ENCODE measurements at regions of chr4 and their contacts with region 1.

Region 1: DNA sequence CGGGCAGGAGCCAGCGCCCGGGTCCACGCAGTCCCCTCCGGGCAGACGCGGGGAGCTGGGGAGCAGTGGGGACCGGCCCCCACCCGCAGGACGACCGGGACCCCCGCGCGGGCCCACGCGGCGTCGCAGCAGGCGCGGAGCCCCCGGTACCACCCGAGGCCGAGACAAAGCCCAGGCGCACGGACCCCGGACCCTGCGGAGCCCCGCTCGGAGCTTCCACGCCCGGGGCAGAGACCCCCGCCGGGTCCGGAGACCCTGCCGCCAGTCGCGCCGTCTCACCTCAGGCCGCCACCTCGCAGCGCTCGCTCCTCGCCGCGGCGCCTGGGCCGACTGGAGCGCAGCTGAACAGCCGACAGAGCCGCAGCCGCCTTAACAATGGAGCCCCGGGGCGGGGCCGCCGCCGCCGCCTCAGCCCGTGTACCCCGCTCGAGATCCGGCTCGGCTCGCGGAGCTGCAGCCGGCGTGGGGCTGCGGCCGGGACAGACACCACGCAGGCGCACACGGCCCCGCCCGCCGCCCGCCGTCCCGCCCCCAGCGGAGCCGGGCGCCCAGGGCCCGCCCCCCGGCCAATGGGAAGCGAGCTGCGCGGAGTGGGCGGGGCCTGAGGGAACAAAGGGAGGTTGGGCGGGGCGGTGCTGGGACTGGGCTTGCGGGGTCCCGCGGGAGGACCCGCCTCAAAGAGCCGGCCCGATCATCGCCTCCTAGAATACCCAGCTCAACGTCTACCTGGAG is at the start of gene AFAP1:
- DNase-seq: peak; percentile 86 to 94 (median 92)
- H3K4me3 ChIP-seq: peak within 1 kb of the TSS; percentile 58 to 61
- H3K4me3 Mint-ChIP-seq: peak within 1 kb of the TSS; percentile 66 to 88 (median 74)
- H3K27ac ChIP-seq: peak within 1 kb of the TSS; percentile 70
- H3K27ac Mint-ChIP-seq: peak within 1 kb of the TSS; percentile 23 to 83 (median 45)
- H3K4me1 ChIP-seq: peaks cover 16% of the 10 kb centered on the region
- H3K4me1 Mint-ChIP-seq: peaks cover 12 to 39% (median 26%) of the 10 kb centered on the region in 4 donors
- H3K27me3 ChIP-seq: no peaks in the 10 kb centered on the region
- H3K27me3 Mint-ChIP-seq: peaks cover 0 to 2% of the 10 kb centered on the region in 2 donors
- total RNA-seq, gene AFAP1: 18.8 to 21.8 TPM

Region 2: DNA sequence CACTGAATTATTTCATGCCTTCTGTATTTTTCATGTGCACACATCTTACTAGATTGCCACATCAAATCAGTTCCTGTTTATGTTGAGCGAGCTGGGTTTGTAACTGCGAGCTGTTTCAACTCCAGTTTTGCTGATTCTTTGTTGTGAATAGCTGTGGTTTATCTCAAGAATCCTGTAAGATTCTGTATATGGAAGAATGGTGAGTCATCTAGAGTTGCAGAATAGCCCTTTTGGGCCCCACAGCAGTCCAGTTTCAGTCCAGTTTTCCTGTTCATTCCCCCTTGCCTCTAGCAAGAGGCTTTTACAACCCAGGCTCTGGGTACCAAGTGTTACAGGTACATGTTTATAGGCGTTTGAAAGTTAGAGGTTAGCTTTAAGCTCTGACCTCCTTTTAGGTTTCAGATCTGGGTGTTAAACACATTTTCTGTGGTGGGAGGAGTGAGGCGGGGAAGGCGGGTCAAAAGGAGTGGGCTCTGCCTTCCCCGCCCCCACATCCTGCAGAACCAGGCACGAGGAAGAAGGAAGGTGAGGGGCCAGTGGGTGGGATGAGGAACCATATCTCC is 997.2 kb before region 1 on chr4:
- CTCF ChIA-PET with region 1: no interaction called
- POLR2A ChIA-PET with region 1: no interaction called
- intact Hi-C with region 1: no loop called
- DNase-seq: peak; percentile 57 to 65 (median 63)
- H3K4me3 ChIP-seq: peak overlapping the region; percentile 25 to 30
- H3K4me3 Mint-ChIP-seq: peak overlapping the region; percentile 73 to 92 (median 82)
- H3K27ac ChIP-seq: peak overlapping the region; percentile 52
- H3K27ac Mint-ChIP-seq: peak overlapping the region; percentile 88 to 98 (median 89)
- H3K4me1 ChIP-seq: peaks cover 79% of the 10 kb centered on the region
- H3K4me1 Mint-ChIP-seq: peaks cover 54 to 87% (median 72%) of the 10 kb centered on the region in 4 donors
- H3K27me3 ChIP-seq: no peaks in the 10 kb centered on the region
- H3K27me3 Mint-ChIP-seq: no peaks in the 10 kb centered on the region

Region 3: DNA sequence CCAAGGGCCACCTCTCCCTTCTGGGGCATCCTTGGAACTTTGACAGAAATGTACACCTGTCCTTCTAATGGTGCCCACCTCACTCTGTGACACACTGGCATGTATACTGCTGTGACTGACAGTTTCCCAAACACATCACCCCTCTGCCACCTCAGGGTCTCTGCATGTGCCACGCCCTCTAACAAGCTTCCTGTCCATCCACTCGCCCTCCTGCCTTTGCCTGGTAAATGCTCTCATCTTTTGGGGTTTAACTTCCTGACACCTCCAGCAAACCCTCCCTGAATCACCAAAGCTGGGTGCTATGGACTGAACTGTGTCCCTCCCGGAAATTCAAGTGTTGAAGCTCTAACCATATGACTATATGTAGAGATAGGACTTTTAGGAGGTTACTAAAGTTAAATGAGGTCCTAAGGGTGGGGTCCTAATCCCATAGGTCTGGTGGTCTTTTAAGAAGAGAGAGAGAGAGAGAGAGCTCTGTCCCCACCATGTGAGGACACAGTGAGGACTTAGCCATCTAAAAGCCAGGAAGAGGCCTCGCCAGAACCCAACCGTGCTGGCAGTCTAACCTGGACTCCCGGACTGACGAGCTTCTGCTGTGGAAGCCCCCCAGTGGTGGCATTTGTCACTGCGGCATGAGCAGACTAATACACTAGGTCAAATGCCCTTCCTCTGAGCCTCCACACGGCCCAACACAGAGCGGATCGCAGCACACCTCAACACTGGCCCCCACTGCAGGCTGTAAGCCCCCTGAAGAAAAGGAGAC is 95.5 kb before region 1 on chr4:
- CTCF ChIA-PET with region 1: interaction called, 22 read pairs
- POLR2A ChIA-PET with region 1: interaction called, 9 read pairs
- intact Hi-C with region 1: no loop called
- DNase-seq: peak; percentile 54 to 72 (median 58)
- H3K4me3 ChIP-seq: no peak overlapping the region
- H3K4me3 Mint-ChIP-seq: peak overlapping the region in 1 of 8 donors; percentile 29
- H3K27ac ChIP-seq: no peak overlapping the region
- H3K27ac Mint-ChIP-seq: peak overlapping the region in 6 of 7 donors; percentile 33 to 94 (median 74)
- H3K4me1 ChIP-seq: peaks cover 19% of the 10 kb centered on the region
- H3K4me1 Mint-ChIP-seq: peaks cover 20 to 41% (median 32%) of the 10 kb centered on the region in 4 donors
- H3K27me3 ChIP-seq: no peaks in the 10 kb centered on the region
- H3K27me3 Mint-ChIP-seq: no peaks in the 10 kb centered on the region

Region 4: DNA sequence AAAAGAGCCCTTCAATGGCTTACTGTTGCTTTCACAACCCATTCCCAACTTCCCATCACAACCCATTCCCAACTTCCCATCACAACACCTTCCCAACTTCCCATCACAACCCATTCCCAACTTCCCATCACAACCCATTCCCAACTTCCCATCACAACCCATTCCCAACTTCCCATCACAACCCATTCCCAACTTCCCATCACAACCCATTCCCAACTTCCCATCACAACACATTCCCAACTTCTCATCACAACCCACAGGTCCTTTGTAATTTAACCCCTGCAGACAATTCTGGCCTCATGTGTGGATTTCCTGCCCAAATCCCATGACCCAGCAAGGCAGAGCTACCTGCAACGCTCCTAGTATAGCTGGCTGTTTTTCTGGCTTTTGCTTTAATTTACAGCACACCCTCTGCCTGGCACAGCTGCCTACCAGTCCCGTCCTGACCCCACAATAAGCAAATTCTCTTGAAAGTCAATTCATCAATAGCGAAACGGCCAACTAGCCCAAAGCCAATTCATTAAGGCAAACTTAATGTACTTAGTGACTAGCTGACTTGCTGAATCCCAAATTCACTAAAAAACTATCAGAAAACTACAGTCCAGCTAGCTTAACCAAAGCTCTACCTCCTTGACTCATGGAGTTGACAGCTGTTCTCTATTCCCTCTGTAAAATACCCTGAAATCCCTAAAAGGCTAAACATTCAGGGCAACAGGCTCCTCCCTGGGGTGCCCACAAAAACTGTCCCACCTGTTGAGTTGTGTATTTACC is 75.4 kb before region 1 on chr4:
- CTCF ChIA-PET with region 1: interaction called, 7 read pairs
- POLR2A ChIA-PET with region 1: interaction called, 26 read pairs
- intact Hi-C with region 1: no loop called
- DNase-seq: peak in 4 of 5 donors; percentile 36 to 68 (median 58)
- H3K4me3 ChIP-seq: no peak overlapping the region
- H3K4me3 Mint-ChIP-seq: peak overlapping the region in 7 of 8 donors; percentile 35 to 76 (median 61)
- H3K27ac ChIP-seq: no peak overlapping the region
- H3K27ac Mint-ChIP-seq: peak overlapping the region; percentile 60 to 99 (median 91)
- H3K4me1 ChIP-seq: peaks cover 18% of the 10 kb centered on the region
- H3K4me1 Mint-ChIP-seq: peaks cover 26 to 43% (median 34%) of the 10 kb centered on the region in 4 donors
- H3K27me3 ChIP-seq: no peaks in the 10 kb centered on the region
- H3K27me3 Mint-ChIP-seq: peaks cover 0 to 4% of the 10 kb centered on the region in 2 donors

Region 5: GRCh38 chr4:7964890-7965662 is 25.5 kb after region 1 on chr4:
- CTCF ChIA-PET with region 1: interaction called, 5 read pairs
- POLR2A ChIA-PET with region 1: interaction called, 51 read pairs
- intact Hi-C with region 1: loop called (anchors 1 kb)
- DNase-seq: peak; percentile 41 to 90 (median 60)
- H3K4me3 ChIP-seq: no peak overlapping the region
- H3K4me3 Mint-ChIP-seq: peak overlapping the region; percentile 46 to 86 (median 65)
- H3K27ac ChIP-seq: peak overlapping the region; percentile 66
- H3K27ac Mint-ChIP-seq: peak overlapping the region; percentile 88 to 97 (median 93)
- H3K4me1 ChIP-seq: peaks cover 60% of the 10 kb centered on the region
- H3K4me1 Mint-ChIP-seq: peaks cover 30 to 72% (median 52%) of the 10 kb centered on the region in 4 donors
- H3K27me3 ChIP-seq: no peaks in the 10 kb centered on the region
- H3K27me3 Mint-ChIP-seq: no peaks in the 10 kb centered on the region

Region 6: DNA sequence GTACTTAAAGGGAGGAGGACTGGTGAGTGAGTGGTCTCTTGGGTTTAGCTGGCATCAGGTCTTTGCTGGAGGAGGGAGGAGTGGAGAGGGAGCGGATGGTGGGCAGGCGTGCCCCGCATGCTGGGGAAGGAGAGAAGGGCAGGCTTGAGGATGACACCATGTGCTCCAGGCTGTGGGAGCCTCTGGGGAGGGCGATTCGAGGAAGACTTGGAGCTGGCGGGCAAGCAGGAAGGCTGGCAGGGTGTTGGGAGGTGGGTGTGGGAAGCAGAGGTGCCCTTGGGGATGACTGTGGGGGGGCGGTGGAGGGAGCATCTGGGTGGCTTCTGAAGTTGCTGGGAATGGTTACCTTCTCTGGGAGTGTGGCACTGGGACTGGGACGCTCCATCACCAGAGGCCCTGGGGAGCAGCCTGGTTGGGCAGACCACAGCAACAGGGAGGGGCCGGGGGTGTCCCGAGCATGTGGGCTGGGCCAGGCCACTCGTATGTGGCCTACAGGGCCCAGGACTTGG is 30.9 kb after region 1 on chr4:
- CTCF ChIA-PET with region 1: interaction called, 5 read pairs
- POLR2A ChIA-PET with region 1: interaction called, 51 read pairs
- intact Hi-C with region 1: loop called (anchors 1 kb)
- DNase-seq: no peak
- H3K4me3 ChIP-seq: peak overlapping the region; percentile 50 to 59
- H3K4me3 Mint-ChIP-seq: peak overlapping the region; percentile 92 to 99 (median 98)
- H3K27ac ChIP-seq: peak overlapping the region; percentile 67
- H3K27ac Mint-ChIP-seq: peak overlapping the region; percentile 91 to 98 (median 97)
- H3K4me1 ChIP-seq: peaks cover 66% of the 10 kb centered on the region
- H3K4me1 Mint-ChIP-seq: peaks cover 28 to 74% (median 56%) of the 10 kb centered on the region in 4 donors
- H3K27me3 ChIP-seq: no peaks in the 10 kb centered on the region
- H3K27me3 Mint-ChIP-seq: no peaks in the 10 kb centered on the region

Region 7: GRCh38 chr4:7987148-7987989 is 47.8 kb after region 1 on chr4:
- CTCF ChIA-PET with region 1: interaction called, 13 read pairs
- POLR2A ChIA-PET with region 1: interaction called, 3 read pairs
- intact Hi-C with region 1: loop called (anchors 1 kb)
- DNase-seq: peak; percentile 67 to 71 (median 69)
- H3K4me3 ChIP-seq: no peak overlapping the region
- H3K4me3 Mint-ChIP-seq: no peak overlapping the region
- H3K27ac ChIP-seq: no peak overlapping the region
- H3K27ac Mint-ChIP-seq: no peak overlapping the region
- H3K4me1 ChIP-seq: peaks cover 5% of the 10 kb centered on the region
- H3K4me1 Mint-ChIP-seq: peaks cover 2 to 4% (median 4%) of the 10 kb centered on the region in 4 donors
- H3K27me3 ChIP-seq: no peaks in the 10 kb centered on the region
- H3K27me3 Mint-ChIP-seq: no peaks in the 10 kb centered on the region

Region 8: DNA sequence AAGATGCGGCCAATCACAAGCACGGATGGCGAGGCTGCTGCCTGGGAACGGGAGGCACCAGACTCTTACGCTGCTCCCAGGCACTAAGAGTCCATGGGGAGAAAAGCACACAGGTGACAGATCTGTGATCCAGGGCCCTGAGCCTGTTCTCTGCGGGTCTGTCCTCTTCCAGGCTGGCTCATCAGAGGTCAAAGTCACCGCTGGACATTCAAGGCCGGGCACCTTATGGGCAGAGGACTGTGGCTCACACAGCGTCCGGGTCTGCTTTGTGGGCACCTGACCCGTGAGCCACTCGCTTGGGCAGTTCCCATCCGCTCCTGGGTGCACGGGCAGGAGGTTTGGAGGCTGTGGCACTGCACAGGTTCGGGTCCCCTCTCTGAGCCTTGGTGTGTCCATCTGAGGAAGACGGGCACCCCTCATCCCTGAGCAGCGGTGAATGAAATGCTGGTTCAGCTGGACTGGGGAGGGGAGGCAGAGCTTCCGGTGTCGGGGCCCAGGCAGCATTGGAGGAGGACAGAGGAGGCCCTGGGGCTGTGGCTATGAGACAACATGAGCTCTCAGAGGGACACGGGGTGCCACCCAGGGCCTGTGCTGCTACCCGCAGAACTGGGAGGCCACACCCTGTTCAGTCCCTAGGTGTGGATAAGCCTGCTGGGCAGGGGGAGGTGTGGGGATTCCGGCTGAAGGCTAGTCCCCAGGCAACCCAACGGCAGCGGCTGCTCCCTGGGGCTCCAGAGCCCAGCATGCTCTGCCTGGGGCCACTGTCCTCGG is 61.4 kb after region 1 on chr4:
- CTCF ChIA-PET with region 1: no interaction called
- POLR2A ChIA-PET with region 1: no interaction called
- intact Hi-C with region 1: no loop called
- DNase-seq: no peak
- H3K4me3 ChIP-seq: no peak overlapping the region
- H3K4me3 Mint-ChIP-seq: no peak overlapping the region
- H3K27ac ChIP-seq: no peak overlapping the region
- H3K27ac Mint-ChIP-seq: no peak overlapping the region
- H3K4me1 ChIP-seq: no peaks in the 10 kb centered on the region
- H3K4me1 Mint-ChIP-seq: no peaks in the 10 kb centered on the region
- H3K27me3 ChIP-seq: no peaks in the 10 kb centered on the region
- H3K27me3 Mint-ChIP-seq: no peaks in the 10 kb centered on the region

Region 9: DNA sequence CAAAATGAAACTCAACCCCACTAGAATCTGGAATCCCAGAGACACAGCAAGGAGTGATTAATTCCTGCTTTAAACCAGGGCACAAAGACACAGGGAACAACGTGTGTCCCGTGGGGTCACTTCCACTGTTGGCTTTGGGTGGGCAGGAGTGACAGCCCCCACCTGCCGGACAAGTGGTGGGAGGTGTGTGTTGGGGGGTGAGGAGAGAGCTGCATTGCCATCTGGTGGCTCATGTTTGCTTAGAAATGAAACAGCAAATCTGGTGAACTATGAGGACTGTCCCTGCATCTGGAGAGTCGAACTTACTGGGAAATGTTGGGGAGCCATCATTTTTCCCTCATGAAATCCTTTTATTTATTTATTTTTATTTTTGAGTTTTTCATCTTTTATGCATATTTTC is 76.0 kb after region 1 on chr4:
- CTCF ChIA-PET with region 1: no interaction called
- POLR2A ChIA-PET with region 1: no interaction called
- intact Hi-C with region 1: no loop called
- DNase-seq: no peak
- H3K4me3 ChIP-seq: no peak overlapping the region
- H3K4me3 Mint-ChIP-seq: no peak overlapping the region
- H3K27ac ChIP-seq: no peak overlapping the region
- H3K27ac Mint-ChIP-seq: no peak overlapping the region
- H3K4me1 ChIP-seq: no peaks in the 10 kb centered on the region
- H3K4me1 Mint-ChIP-seq: peaks cover 0 to 2% (median 0%) of the 10 kb centered on the region in 4 donors
- H3K27me3 ChIP-seq: no peaks in the 10 kb centered on the region
- H3K27me3 Mint-ChIP-seq: no peaks in the 10 kb centered on the region

Measured in CD4-positive, alpha-beta memory T cell (primary cell).